ENCODE measurements at regions of chr3 and their contacts with region 1.

Region 1: GRCh38 chr3:122679085-122679881 is 1.4 kb upstream of the PARP14 start:
- DNase-seq: peak; percentile 87 to 90
- ATAC-seq: peak; percentile 88
- H3K4me3 ChIP-seq: no peak overlapping the region
- H3K27ac ChIP-seq: peak overlapping the region in 1 of 2 donors; percentile 29
- H3K4me1 ChIP-seq: no peaks in the 10 kb centered on the region
- H3K27me3 ChIP-seq: no peaks in the 10 kb centered on the region

Region 2: DNA sequence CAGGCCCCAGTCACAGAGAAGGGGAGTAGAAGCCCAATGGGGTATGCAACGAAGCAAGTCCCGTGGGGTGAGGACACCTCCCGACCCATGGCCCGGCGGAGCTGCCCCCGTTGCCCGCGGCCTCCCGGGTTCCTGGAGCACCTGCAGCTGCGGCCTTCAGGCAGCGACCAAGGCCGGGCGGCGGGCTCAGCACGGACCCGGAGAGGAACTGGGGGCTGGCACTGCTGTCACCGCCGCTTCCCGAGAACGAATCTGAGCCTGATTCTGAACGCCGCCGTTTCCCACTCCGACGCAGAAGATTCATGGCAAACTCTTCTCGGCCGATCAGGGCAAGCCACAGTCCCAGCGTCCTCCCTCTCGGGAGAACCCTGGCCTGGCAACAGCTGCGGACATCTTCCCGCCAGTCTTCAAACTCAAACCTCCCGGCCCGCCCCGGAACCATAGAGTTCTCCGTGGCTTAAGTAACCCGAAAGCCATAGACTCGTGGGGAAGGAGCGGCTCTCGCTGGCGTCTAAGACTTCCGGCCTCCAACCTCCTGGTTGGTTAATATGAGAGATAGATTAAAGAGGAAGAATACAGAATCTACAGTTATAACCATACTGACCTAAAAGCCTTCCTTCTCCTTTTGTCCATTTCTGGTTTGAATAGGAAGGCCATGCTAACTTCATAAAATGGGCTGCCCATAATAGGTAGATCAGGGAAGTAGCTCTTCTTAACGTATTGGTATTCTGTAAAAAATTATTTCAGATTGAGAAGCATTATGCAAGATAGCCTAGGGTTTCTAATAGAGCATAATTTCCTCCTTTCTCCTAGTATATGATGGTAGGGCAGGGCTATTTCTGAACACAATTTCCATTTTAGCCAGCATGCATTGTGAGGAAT is 1133.5 kb before region 1 on chr3 and contains the start of gene POLQ:
- intact Hi-C with region 1: loop called (anchors 10 kb)
- DNase-seq: peak; percentile 93 to 95
- ATAC-seq: peak; percentile 98
- H3K4me3 ChIP-seq: peak within 1 kb of the TSS; percentile 82 to 98
- H3K27ac ChIP-seq: peak within 1 kb of the TSS in 1 of 2 donors; percentile 67
- H3K4me1 ChIP-seq: no peaks in the 10 kb centered on the region
- H3K27me3 ChIP-seq: no peaks in the 10 kb centered on the region
- total RNA-seq, gene POLQ: 0.23 to 0.63 TPM

Region 3: GRCh38 chr3:122392868-122393844 is 286.1 kb before region 1 on chr3:
- intact Hi-C with region 1: loop called (anchors 2 to 5 kb)
- DNase-seq: no peak
- ATAC-seq: no peak
- H3K4me3 ChIP-seq: no peak overlapping the region
- H3K27ac ChIP-seq: no peak overlapping the region
- H3K4me1 ChIP-seq: no peaks in the 10 kb centered on the region
- H3K27me3 ChIP-seq: no peaks in the 10 kb centered on the region

Region 4: GRCh38 chr3:122415104-122415719 is 264.1 kb before region 1 on chr3:
- intact Hi-C with region 1: no loop called
- DNase-seq: no peak
- ATAC-seq: no peak
- H3K4me3 ChIP-seq: peak overlapping the region; percentile 80 to 93
- H3K27ac ChIP-seq: peak overlapping the region; percentile 69 to 89
- H3K4me1 ChIP-seq: peaks cover 0 to 4% of the 10 kb centered on the region in 2 donors
- H3K27me3 ChIP-seq: no peaks in the 10 kb centered on the region

Region 5: DNA sequence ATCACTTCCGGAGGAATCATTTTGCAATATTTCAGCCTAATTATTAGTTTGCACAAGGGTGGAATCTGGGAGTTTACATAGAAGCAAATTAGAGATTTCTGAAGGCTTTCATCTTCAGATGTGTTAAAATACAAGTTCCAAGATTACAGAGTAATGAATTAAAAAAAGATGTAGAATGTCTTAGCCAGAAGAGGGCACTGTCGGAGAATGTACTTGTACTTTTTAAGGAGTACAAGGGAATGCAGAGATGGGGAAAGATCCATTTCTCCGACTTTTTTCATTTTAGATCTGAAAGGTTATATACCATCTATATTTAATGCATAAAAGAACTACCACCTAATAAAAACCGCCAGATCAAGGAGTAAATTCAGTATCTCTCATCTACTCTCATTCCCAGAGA is 220.3 kb before region 1 on chr3:
- intact Hi-C with region 1: loop called (anchors 5 to 10 kb)
- DNase-seq: no peak
- ATAC-seq: no peak
- H3K4me3 ChIP-seq: no peak overlapping the region
- H3K27ac ChIP-seq: no peak overlapping the region
- H3K4me1 ChIP-seq: no peaks in the 10 kb centered on the region
- H3K27me3 ChIP-seq: no peaks in the 10 kb centered on the region

Region 6: GRCh38 chr3:122514123-122515019 is 164.9 kb before region 1 on chr3 and contains the start of gene KPNA1:
- intact Hi-C with region 1: loop called in 1 of 2 experiments (anchors 2 kb)
- DNase-seq: peak; percentile 92 to 95
- ATAC-seq: peak; percentile 98
- H3K4me3 ChIP-seq: peak within 1 kb of the TSS; percentile 55 to 81
- H3K27ac ChIP-seq: peak within 1 kb of the TSS; percentile 28 to 83
- H3K4me1 ChIP-seq: no peaks in the 10 kb centered on the region
- H3K27me3 ChIP-seq: no peaks in the 10 kb centered on the region
- total RNA-seq, gene KPNA1: 71.8 to 74.1 TPM

Region 7: GRCh38 chr3:122564155-122564912 is 114.9 kb before region 1 on chr3 and contains the starts of genes DTX3L and PARP9:
- intact Hi-C with region 1: loop called (anchors 1 to 5 kb)
- DNase-seq: peak; percentile 92 to 93
- ATAC-seq: peak; percentile 97
- H3K4me3 ChIP-seq: peak within 1 kb of the TSS; percentile 65 to 77
- H3K27ac ChIP-seq: peak within 1 kb of the TSS; percentile 5 to 59
- H3K4me1 ChIP-seq: no peaks in the 10 kb centered on the region
- H3K27me3 ChIP-seq: no peaks in the 10 kb centered on the region
- total RNA-seq, gene DTX3L: 26.6 to 33.3 TPM
- total RNA-seq, gene PARP9: 30.4 to 41.9 TPM